ENCODE measurements at regions of chr1 and their contacts with region 1.

Region 1: DNA sequence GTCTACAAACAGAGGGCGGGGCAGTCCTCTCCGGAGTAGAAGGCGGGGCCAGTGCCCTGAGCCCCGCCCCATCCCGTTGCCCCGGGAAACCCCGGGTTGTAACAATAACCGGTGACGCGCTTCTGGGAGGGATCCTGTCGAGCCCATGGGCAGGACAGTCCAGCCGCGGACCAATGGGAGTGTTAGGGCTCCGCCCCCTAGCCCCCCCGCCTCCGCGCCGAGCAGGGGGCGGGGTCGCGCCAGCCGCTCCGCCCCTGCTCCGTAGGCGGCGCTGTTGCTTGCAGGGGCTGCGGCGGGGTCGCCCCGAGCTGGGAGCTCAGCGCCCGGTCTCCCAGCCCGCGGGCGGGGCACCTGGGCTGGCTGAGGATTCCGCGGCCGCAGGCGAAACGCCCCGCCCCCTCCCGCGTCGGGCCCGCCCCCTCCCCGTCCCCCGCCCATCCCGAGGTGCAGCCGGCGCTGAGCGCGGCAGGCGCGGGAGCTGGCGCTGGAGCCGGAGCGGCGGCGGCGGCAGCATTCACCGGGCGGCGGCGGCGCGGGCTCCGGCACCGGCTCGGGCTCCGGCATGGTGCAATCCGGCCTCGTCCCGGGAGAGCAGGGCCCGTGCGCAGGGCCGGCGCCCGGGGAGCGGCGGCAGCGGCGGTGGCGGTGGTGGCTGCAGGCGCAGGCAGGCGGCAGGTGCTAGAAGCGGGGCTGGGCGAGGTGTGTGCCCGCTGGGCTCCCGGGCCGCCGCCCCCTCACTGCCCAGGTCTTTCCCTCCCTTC is at the start of gene FOXO6:
- DNase-seq: peak; percentile 99
- H3K4me3 ChIP-seq: peak within 1 kb of the TSS; percentile 22 to 76 (median 60)
- H3K27ac ChIP-seq: peak within 1 kb of the TSS; percentile 64 to 71 (median 68)
- H3K4me1 ChIP-seq: peaks cover 0 to 62% (median 57%) of the 10 kb centered on the region in 4 donors
- H3K27me3 ChIP-seq: peaks cover 0 to under 1% (median 0%) of the 10 kb centered on the region in 3 donors
- CTCF ChIP-seq: peak in 2 of 4 experiments; percentile 22 to 40
- EP300 ChIP-seq: no peak
- POLR2A ChIP-seq: no peak
- total RNA-seq, gene FOXO6: 0.49 to 1.4 (median 0.94) TPM

Region 2: GRCh38 chr1:41313661-41314131 is 47.5 kb before region 1 on chr1:
- intact Hi-C with region 1: loop called (anchors 5 kb)
- DNase-seq: no peak
- H3K4me3 ChIP-seq: no peak overlapping the region
- H3K27ac ChIP-seq: peak overlapping the region; percentile 35 to 66 (median 62)
- H3K4me1 ChIP-seq: peaks cover 0 to 28% (median 25%) of the 10 kb centered on the region in 4 donors
- H3K27me3 ChIP-seq: no peaks in the 10 kb centered on the region
- CTCF ChIP-seq: peak in 3 of 4 experiments; percentile 6 to 37 (median 33)
- EP300 ChIP-seq: no peak
- POLR2A ChIP-seq: no peak

Region 3: GRCh38 chr1:41381692-41382477 is 20.7 kb after region 1 on chr1:
- intact Hi-C with region 1: loop called (anchors 1 kb)
- DNase-seq: peak; percentile 83
- H3K4me3 ChIP-seq: peak overlapping the region; percentile 56 to 69 (median 66)
- H3K27ac ChIP-seq: peak overlapping the region; percentile 96 to 100 (median 98)
- H3K4me1 ChIP-seq: peaks cover 0 to 53% (median 46%) of the 10 kb centered on the region in 4 donors
- H3K27me3 ChIP-seq: no peaks in the 10 kb centered on the region
- CTCF ChIP-seq: no peak
- EP300 ChIP-seq: no peak
- POLR2A ChIP-seq: no peak

Region 4: DNA sequence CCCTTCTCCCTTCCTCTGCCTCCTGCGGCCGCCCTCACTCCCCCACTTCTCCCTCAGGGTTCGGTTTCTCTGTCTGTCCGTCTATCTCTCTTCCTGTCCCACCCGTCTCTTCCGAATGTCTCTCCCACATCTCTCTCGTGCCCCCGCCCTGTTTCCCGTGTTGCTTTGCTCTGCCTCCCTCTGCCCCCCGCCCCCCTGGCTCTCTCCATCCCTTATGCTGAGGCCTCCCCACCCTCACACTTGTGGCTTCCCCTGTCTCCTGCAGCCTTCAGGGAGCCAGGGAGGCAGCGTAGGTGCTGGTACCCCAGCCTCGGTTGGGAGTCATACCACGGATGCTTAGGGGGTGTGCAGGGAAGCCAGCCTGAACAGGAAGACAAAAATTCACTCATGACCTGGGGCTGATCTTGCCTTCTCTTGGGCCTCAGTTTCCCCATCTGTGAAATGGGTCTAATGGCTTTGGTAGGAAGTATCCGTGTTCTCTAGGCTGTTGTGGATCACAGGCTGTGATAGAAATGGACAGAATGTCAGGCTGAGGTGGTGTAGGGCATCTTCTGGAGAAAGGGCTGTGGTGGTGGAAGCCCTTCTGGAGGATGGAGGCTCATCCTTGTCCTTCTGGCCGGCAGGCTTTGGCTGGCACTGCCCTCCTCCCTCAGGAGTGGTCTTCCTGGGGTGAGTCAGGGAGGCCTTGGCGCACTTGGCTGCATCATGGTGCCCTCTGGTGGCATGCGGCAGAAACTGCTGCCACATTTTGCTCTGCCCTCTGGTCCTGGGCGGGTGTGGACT is 55.6 kb after region 1 on chr1:
- intact Hi-C with region 1: loop called (anchors 5 kb)
- DNase-seq: peak; percentile 79
- H3K4me3 ChIP-seq: no peak overlapping the region
- H3K27ac ChIP-seq: no peak overlapping the region
- H3K4me1 ChIP-seq: peaks cover 0 to 22% (median 10%) of the 10 kb centered on the region in 4 donors
- H3K27me3 ChIP-seq: no peaks in the 10 kb centered on the region
- CTCF ChIP-seq: peak; percentile 90 to 94 (median 92)
- EP300 ChIP-seq: no peak
- POLR2A ChIP-seq: no peak